SK-N-SH (cell line): ENCODE measurements at regions of chr5 and their contacts with region 1.

Region 1: DNA sequence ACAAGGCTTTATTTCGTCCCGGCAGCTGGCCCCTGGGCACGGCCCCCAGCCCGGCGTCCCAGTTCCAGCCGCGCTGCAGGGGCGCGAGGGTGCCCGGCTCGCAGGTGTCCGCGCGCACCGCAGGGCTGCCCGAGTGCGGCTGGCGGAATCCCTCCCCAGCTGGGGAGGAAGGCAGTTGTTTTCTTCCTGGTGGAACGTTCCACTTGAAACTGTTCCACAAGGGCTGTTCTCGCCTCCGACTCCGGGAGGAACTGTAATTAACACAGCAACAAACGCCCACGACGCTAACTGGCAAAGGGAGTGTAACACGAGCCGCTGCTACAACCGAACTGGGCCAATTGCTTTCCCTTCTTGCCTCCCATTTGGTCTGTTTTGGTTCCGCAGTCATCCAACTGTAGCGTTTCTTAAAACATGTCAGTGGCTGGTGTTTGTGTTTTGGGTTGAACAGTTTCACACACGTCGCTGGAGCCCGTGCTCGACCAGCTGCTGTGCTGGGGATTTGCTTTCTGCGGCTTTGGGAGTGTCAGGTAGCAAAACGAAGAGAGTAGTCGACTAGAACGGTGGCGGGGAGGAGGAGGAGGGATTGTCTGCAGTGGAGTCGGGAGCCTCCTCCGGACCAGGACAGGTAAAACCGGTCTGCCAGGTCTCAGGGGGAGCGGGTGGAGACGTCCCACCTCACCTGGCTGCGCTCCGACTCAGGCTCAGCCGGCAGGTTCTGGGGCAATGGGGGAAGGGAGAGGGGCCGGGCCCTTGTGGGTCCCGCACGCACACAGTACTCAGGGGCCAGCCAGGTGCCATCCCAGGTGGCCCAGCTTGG is 131.6 kb upstream of the NIPBL start:
- DNase-seq: peak; percentile 83
- H3K4me3 ChIP-seq: peak overlapping the region; percentile 56 to 80
- H3K27ac ChIP-seq: no peak overlapping the region
- H3K4me1 ChIP-seq: peaks cover 0 to 17% of the 10 kb centered on the region in 2 experiments; a peak in 2 of 4 replicates
- H3K27me3 ChIP-seq: peaks cover 28% of the 10 kb centered on the region
- CTCF ChIP-seq: peak; percentile 18
- EP300 ChIP-seq: no peak
- RAD21 ChIP-seq: no peak

Region 2: GRCh38 chr5:36875790-36876388 is 130.9 kb after region 1 on chr5:
- CTCF ChIA-PET with region 1: interaction called, 12 read pairs
- POLR2A ChIA-PET with region 1: no interaction called
- DNase-seq: peak; percentile 81
- H3K4me3 ChIP-seq: peak overlapping the region; percentile 89 to 92
- H3K27ac ChIP-seq: peak overlapping the region; percentile 92 to 96
- H3K4me1 ChIP-seq: peaks cover 15 to 17% of the 10 kb centered on the region in 2 experiments; a peak in 2 of 4 replicates
- H3K27me3 ChIP-seq: no peaks in the 10 kb centered on the region
- CTCF ChIP-seq: peak; percentile 63
- EP300 ChIP-seq: no peak; a peak in 1 of 4 replicates
- RAD21 ChIP-seq: no peak